Heart left ventricle (tissue), 16 donors: ENCODE measurements at regions of chr17 and their contacts with region 1.

Region 1: DNA sequence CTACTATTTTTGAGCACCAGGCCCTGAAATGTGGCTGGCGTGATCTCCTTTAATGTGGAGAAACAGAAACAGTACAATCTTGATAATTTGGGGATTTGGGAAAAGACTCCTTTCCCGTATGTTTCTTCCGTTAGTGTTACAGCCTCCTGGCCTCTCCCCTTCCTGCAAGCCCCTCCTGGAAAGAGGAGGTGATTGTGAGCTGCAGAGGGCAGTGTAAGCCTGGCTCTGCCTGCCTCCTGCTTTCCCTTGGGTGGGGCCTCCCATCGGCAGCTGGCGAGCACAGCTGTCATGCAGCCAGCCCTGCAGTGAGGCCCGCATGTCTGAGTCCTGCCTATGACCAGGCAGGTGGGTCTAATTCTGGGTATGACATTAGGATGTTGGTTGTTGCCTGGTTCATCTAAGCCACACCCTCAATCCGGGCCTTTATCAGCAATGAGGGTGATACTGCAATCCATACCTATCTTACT is 48.7 kb upstream of the WSB1 start:
- DNase-seq: peak; percentile 83 to 92 (median 89)
- ATAC-seq: peak; percentile 91 to 96 (median 93)
- H3K4me3 ChIP-seq: peak overlapping the region in 7 of 12 donors; percentile 1 to 38 (median 19)
- H3K27ac ChIP-seq: peak overlapping the region; percentile 78 to 97 (median 84)
- H3K4me1 ChIP-seq: peaks cover 0 to 72% (median 39%) of the 10 kb centered on the region in 12 donors
- H3K27me3 ChIP-seq: no peaks in the 10 kb centered on the region
- CTCF ChIP-seq: peak; percentile 57 to 91 (median 80)
- POLR2A ChIP-seq: no peak

Region 2: GRCh38 chr17:27106347-27106981 is 138.8 kb before region 1 on chr17:
- intact Hi-C with region 1: no loop called
- DNase-seq: no peak
- ATAC-seq: no peak
- H3K4me3 ChIP-seq: no peak overlapping the region
- H3K27ac ChIP-seq: no peak overlapping the region
- H3K4me1 ChIP-seq: no peaks in the 10 kb centered on the region
- H3K27me3 ChIP-seq: peaks cover 0 to 9% (median 0%) of the 10 kb centered on the region in 9 donors
- CTCF ChIP-seq: no peak
- POLR2A ChIP-seq: no peak

Region 3: DNA sequence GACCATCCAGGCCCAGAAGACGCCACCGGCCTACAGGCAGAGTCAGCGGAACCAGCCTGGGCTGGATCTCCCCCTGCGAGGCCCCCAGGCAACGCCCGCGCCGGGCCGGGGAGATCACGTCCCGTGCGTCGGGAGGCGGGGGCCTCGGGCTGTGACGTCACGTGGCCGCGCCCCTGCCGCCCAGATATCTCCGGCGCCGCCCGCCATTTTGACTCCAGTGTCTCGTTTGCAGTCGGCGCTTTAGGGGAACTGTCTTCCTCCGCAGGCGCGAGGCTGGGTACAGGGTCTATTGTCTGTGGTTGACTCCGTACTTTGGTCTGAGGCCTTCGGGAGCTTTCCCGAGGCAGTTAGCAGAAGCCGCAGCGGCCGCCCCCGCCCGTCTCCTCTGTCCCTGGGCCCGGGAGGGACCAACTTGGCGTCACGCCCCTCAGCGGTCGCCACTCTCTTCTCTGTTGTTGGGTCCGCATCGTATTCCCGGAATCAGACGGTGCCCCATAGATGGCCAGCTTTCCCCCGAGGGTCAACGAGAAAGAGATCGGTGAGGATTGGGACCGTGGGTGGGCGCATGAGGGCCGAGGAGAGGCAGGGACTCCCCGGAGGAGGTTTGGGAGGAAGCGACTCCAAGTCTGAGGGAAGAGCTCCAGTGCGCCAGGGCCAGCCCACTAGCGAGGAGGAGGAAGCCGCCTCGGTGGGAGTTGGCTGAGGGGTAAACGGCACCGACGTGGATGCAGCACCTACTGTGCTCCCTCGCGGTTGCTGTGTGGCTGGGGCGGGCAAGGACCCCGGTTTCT is 48.8 kb after region 1 on chr17 and contains the start of gene WSB1:
- intact Hi-C with region 1: loop called (anchors 1 to 10 kb)
- DNase-seq: peak; percentile 95 to 97 (median 96)
- ATAC-seq: peak; percentile 95 to 97 (median 97)
- H3K4me3 ChIP-seq: peak within 1 kb of the TSS; percentile 72 to 99 (median 80)
- H3K27ac ChIP-seq: peak within 1 kb of the TSS; percentile 98 to 100 (median 99)
- H3K4me1 ChIP-seq: peaks cover 11 to 44% (median 34%) of the 10 kb centered on the region in 12 donors
- H3K27me3 ChIP-seq: peaks cover 0 to 4% (median 0%) of the 10 kb centered on the region in 9 donors
- CTCF ChIP-seq: peak in 1 of 12 donors; percentile 11
- POLR2A ChIP-seq: peak; percentile 80 to 98
- total RNA-seq, gene WSB1: 22.3 to 119 (median 53.4) TPM

Region 4: DNA sequence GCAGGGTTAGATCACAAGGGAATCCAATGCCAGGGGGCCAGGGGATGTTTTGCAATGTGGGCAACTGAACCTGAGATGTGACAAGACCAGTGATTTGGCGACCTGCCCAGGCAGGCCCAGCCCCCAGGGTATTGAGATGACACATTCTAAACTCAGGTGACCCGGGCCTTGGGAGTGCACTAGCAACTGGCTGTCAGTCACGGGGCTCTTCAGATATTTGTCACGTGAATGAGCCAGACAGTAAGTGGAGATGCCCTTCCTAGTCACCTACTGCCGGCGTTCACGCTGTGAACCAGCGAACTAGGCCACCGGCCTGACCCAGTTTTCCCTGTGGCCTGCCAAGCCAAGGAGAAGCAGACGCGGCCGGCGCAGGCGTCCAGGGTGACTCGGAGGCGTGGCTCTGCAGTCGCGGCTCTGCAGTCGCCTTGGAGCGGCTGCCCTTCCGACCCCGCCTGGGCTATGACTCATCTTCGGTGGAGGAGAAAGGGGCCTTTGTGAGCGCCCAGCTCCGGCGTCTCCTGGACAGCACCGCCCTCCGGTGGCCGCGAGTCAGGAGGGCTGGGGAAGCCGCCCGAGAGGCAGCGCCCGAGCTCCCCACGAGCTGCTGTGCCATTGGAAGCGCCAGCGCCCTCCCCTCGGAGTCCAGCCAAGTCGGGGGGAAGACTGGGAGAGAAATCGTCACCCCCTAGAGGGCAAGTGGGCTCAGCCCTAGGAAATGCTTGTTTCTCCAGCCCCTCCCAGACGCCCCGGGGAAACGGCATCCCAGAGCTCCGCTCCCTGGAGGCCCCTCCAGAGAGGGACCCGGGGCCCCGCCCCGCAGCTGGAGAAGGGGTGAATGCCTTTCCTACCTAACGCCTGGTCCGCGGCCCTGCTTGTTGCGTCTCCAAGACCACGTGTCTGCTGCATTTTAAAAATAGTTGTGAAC is 87.5 kb after region 1 on chr17:
- intact Hi-C with region 1: loop called in 9 of 10 experiments (anchors 1 to 5 kb)
- DNase-seq: peak; percentile 98 to 100 (median 99)
- ATAC-seq: peak; percentile 95 to 97 (median 96)
- H3K4me3 ChIP-seq: peak overlapping the region in 11 of 12 donors; percentile 29 to 69 (median 57)
- H3K27ac ChIP-seq: peak overlapping the region; percentile 92 to 99 (median 96)
- H3K4me1 ChIP-seq: peaks cover 0 to 35% (median 19%) of the 10 kb centered on the region in 12 donors
- H3K27me3 ChIP-seq: no peaks in the 10 kb centered on the region
- CTCF ChIP-seq: peak; percentile 82 to 99 (median 93)
- POLR2A ChIP-seq: peak in 1 of 2 donors; percentile 48

Region 5: DNA sequence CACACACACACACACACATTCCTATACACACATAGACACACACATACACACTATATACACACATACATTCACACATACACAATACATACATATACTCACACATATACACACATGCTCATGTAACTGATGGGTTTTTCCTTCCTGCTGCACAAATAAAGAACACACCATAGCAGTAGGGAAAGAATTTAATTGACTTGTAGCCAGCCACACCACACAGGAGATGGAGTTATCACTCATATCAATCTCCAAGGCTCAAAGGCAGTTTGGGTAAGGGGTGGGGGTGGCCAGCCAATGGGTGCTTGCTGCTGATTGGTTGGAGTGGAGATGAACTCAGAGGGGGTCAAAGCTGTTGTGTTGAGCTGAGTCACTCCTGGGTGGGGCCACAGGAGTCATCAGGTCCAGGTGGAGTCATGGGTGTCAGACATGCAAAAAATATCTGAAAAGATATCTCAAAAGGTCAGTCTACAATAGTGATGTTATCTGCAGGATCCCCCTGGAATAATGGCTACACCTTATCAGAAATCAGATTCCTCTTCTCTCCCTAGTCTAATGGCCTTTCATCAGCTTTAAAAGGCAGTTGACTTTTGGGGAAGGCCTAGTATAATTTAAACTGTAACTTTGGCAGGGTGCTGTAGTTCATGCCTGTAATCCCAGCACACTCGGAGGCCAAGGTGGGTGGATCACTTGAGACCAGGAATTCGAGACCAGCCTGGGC is 94.7 kb after region 1 on chr17:
- intact Hi-C with region 1: loop called in 2 of 10 experiments (anchors 5 kb)
- DNase-seq: no peak
- ATAC-seq: no peak
- H3K4me3 ChIP-seq: no peak overlapping the region
- H3K27ac ChIP-seq: no peak overlapping the region
- H3K4me1 ChIP-seq: peaks cover 0 to 43% (median 22%) of the 10 kb centered on the region in 12 donors
- H3K27me3 ChIP-seq: no peaks in the 10 kb centered on the region
- CTCF ChIP-seq: no peak
- POLR2A ChIP-seq: no peak

Region 6: GRCh38 chr17:27345141-27345904 is 100.1 kb after region 1 on chr17:
- intact Hi-C with region 1: loop called in 2 of 10 experiments (anchors 5 kb)
- DNase-seq: no peak
- ATAC-seq: no peak
- H3K4me3 ChIP-seq: no peak overlapping the region
- H3K27ac ChIP-seq: peak overlapping the region in 1 of 12 donors; percentile 62
- H3K4me1 ChIP-seq: peaks cover 0 to 48% (median 27%) of the 10 kb centered on the region in 12 donors
- H3K27me3 ChIP-seq: no peaks in the 10 kb centered on the region
- CTCF ChIP-seq: no peak
- POLR2A ChIP-seq: no peak

Region 7: DNA sequence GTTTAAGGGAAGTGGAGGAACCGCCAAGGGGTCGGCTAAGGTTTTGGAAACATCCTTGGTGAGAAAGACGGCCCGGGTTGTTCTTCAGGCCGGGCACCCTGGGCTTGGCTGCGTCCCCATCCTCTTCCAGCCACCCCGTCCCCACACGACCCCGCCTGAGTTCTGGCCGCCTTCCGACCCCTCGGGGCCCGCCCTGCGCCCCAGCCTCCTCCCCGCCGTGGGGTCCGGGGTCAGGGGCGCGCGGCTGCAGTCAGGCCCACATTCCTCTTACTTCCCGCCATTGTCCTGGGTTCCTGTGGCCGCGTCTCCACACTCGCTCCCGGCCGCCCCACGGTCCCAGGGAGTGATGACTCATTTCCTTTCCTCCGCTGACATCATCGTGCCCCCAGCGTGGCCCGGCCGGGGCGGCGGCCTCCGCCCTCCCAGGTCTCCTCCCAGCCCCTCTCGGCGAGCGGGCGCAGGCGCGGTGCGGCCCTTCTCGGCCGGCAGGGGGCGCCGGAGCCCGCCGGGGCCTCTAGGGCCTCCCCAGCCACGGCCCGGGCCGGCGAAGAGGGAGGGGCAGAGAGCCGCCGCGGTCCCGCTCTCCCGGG is 108.3 kb after region 1 on chr17:
- intact Hi-C with region 1: loop called in 3 of 10 experiments (anchors 1 to 5 kb)
- DNase-seq: peak; percentile 95 to 97 (median 95)
- ATAC-seq: peak; percentile 92 to 97 (median 94)
- H3K4me3 ChIP-seq: peak overlapping the region; percentile 46 to 90 (median 66)
- H3K27ac ChIP-seq: peak overlapping the region; percentile 80 to 99 (median 96)
- H3K4me1 ChIP-seq: peaks cover 0 to 32% (median 21%) of the 10 kb centered on the region in 12 donors
- H3K27me3 ChIP-seq: no peaks in the 10 kb centered on the region
- CTCF ChIP-seq: peak; percentile 64 to 99 (median 98)
- POLR2A ChIP-seq: peak in 1 of 2 donors; percentile 81

Region 8: DNA sequence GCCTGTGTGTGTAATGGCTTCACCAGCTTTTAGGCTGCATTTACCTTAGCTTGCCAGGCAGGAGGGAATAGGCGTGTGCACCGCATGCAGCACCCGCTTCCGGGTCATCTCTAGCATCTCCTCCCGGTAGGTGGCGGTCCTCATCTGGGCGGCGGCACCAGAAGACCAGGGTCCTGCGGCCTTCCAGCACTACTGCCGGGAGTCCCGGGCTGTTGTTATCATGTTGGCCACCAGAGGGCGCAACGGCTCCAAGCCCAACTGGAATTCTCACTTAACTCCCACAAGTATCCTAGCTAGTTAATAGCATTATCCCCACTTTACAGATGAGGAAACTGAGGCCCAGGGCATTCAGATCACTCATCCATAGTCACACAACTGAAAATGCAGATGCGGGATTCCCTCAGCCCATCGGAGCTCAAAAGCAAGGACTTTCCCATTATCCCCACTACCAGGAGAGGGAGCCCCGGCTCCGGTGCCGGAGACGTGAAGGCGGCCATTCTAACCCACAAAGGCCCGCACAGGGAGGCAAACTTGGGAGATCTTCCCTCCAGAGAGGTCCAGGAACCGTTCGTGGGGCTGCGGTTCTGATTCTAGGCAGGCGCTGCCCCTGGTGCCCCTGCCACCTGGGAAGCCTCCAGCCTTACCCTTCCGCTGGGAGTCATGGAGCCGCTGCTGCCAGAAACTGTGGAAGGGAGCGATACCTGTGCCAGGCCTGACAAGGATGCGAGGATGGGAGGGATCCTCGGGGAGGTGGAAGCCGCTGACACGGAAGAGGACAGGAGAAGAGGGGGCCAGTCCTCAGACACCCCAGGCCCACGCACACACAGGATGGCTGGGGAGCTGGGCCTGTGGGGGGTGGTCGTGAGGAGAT is 409.6 kb after region 1 on chr17:
- intact Hi-C with region 1: loop called in 1 of 10 experiments (anchors 5 kb)
- DNase-seq: peak; percentile 50 to 82 (median 69)
- ATAC-seq: peak in 3 of 4 donors; percentile 35 to 46 (median 40)
- H3K4me3 ChIP-seq: no peak overlapping the region
- H3K27ac ChIP-seq: no peak overlapping the region
- H3K4me1 ChIP-seq: peaks cover 0 to 5% (median 0%) of the 10 kb centered on the region in 12 donors
- H3K27me3 ChIP-seq: no peaks in the 10 kb centered on the region
- CTCF ChIP-seq: peak; percentile 83 to 99 (median 92)
- POLR2A ChIP-seq: no peak